Calu3 (cell line): ENCODE measurements at regions of chr17 and their contacts with region 1.

Region 1: DNA sequence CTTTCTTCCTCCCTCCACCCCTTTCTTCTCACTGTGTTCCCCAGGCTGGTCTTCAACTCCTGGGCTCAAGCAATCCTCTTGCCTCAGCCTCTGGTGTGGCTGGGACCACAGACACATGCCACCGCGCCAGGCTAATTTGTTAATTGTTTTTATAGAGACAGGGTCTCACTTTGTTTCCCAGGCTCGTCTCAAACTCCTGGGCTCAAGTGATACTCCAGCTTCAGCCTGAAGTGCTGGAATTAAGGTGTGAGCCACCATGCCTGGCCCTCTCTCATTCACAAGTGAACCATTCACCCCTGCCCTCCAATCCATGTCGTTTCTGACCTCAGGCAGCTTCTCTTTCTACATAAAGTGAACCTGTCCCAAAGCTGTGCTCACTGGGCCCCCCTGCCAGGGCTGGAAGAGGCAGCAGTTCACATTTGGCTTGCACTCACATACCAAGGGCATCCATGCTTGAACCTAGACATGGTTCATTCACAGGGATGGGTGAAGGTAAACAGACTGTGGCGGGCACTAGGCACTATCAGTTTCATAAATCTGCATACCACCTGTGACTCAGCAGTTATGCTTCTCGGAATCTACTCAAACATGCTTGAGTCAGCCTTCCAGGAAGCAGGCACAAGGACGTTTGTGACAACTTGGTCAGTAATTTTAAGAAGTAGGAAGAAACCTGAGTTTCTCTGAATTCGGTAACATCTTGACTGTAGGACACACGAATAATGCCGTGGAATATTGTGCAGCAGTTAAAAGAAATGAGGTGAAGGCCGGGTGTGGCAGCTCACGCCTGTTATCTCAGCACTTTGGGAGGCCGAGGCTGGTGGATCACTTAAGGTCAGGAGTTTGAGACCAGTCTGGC is 6.0 kb upstream of the RNF213 start:
- DNase-seq: peak; percentile 67
- H3K4me3 Mint-ChIP-seq: no peak overlapping the region
- H3K27ac Mint-ChIP-seq: peak overlapping the region; percentile 34
- H3K4me1 Mint-ChIP-seq: peaks cover 32% of the 10 kb centered on the region
- H3K27me3 Mint-ChIP-seq: no peaks in the 10 kb centered on the region
- CTCF ChIP-seq: no peak

Region 2: GRCh38 chr17:80008383-80008840 is 246.2 kb before region 1 on chr17:
- CTCF ChIA-PET with region 1: no interaction called
- intact Hi-C with region 1: loop called (anchors 5 kb)
- DNase-seq: peak; percentile 91
- H3K4me3 Mint-ChIP-seq: no peak overlapping the region
- H3K27ac Mint-ChIP-seq: peak overlapping the region; percentile 52
- H3K4me1 Mint-ChIP-seq: peaks cover 9% of the 10 kb centered on the region
- H3K27me3 Mint-ChIP-seq: no peaks in the 10 kb centered on the region
- CTCF ChIP-seq: peak; percentile 96

Region 3: GRCh38 chr17:80082403-80083135 is 172.1 kb before region 1 on chr17:
- CTCF ChIA-PET with region 1: no interaction called
- intact Hi-C with region 1: loop called (anchors 2 kb)
- DNase-seq: peak; percentile 68
- H3K4me3 Mint-ChIP-seq: no peak overlapping the region
- H3K27ac Mint-ChIP-seq: no peak overlapping the region
- H3K4me1 Mint-ChIP-seq: no peaks in the 10 kb centered on the region
- H3K27me3 Mint-ChIP-seq: peaks cover 31% of the 10 kb centered on the region
- CTCF ChIP-seq: peak; percentile 69

Region 4: DNA sequence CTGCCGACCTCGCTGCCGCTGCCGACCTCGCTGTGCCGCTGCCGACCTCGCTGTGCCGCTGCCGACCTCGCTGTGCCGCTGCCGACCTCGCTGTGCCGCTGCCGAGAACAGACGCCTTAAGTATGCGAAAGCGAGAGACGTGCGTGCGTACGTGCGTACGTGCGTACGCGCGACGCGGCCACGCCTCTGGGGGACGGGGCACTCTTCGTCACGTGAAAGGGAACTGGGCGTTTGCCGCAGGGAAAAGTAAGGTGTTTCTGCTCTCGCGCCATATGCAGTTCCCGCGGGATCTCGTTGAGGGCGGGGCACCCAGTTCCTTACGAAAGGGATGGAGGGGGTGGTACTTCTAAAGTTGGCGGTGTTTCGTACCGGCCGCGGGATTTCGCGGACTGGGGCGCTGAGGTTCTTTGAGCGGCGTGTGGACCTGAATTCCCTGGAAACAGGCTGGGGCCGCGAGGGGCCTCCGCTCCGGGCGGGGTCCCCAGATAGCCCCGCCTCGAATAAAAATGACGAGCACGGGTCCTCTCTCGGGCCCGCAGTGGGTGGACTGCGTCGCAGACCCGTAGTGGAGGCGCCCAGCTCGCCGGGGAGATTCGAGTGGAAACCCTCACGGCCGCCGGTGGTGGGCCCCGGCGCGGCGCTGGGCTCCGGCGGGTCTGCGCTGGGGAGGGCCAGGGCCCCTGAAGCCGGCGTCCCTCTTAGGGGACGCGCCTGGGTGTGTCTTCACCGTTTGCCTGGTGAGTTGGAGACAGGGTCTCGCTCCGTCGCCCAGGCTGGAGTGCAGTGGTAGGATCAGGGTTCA is 107.4 kb before region 1 on chr17 and contains the start of gene EIF4A3:
- CTCF ChIA-PET with region 1: no interaction called
- intact Hi-C with region 1: loop called (anchors 5 kb)
- DNase-seq: peak; percentile 97
- H3K4me3 Mint-ChIP-seq: peak within 1 kb of the TSS; percentile 75
- H3K27ac Mint-ChIP-seq: peak within 1 kb of the TSS; percentile 96
- H3K4me1 Mint-ChIP-seq: peaks cover 12% of the 10 kb centered on the region
- H3K27me3 Mint-ChIP-seq: no peaks in the 10 kb centered on the region
- CTCF ChIP-seq: no peak
- total RNA-seq, gene EIF4A3: 124 and 125 TPM in 2 replicates

Region 5: GRCh38 chr17:80219013-80219762 is 35.4 kb before region 1 on chr17:
- CTCF ChIA-PET with region 1: no interaction called
- intact Hi-C with region 1: loop called (anchors 5 kb)
- DNase-seq: peak; percentile 81
- H3K4me3 Mint-ChIP-seq: peak overlapping the region; percentile 92
- H3K27ac Mint-ChIP-seq: peak overlapping the region; percentile 79
- H3K4me1 Mint-ChIP-seq: peaks cover 19% of the 10 kb centered on the region
- H3K27me3 Mint-ChIP-seq: peaks cover 8% of the 10 kb centered on the region
- CTCF ChIP-seq: no peak

Region 6: GRCh38 chr17:80233202-80233601 is 21.4 kb before region 1 on chr17:
- CTCF ChIA-PET with region 1: no interaction called
- intact Hi-C with region 1: no loop called
- DNase-seq: no peak
- H3K4me3 Mint-ChIP-seq: no peak overlapping the region
- H3K27ac Mint-ChIP-seq: no peak overlapping the region
- H3K4me1 Mint-ChIP-seq: no peaks in the 10 kb centered on the region
- H3K27me3 Mint-ChIP-seq: no peaks in the 10 kb centered on the region
- CTCF ChIP-seq: no peak

Region 7: GRCh38 chr17:80395402-80396151 is 141.0 kb after region 1 on chr17:
- CTCF ChIA-PET with region 1: no interaction called
- intact Hi-C with region 1: no loop called
- DNase-seq: no peak
- H3K4me3 Mint-ChIP-seq: no peak overlapping the region
- H3K27ac Mint-ChIP-seq: no peak overlapping the region
- H3K4me1 Mint-ChIP-seq: no peaks in the 10 kb centered on the region
- H3K27me3 Mint-ChIP-seq: no peaks in the 10 kb centered on the region
- CTCF ChIP-seq: no peak